AG04449 (cell line): ENCODE measurements at regions of chr7 and their contacts with region 1.

Region 1: DNA sequence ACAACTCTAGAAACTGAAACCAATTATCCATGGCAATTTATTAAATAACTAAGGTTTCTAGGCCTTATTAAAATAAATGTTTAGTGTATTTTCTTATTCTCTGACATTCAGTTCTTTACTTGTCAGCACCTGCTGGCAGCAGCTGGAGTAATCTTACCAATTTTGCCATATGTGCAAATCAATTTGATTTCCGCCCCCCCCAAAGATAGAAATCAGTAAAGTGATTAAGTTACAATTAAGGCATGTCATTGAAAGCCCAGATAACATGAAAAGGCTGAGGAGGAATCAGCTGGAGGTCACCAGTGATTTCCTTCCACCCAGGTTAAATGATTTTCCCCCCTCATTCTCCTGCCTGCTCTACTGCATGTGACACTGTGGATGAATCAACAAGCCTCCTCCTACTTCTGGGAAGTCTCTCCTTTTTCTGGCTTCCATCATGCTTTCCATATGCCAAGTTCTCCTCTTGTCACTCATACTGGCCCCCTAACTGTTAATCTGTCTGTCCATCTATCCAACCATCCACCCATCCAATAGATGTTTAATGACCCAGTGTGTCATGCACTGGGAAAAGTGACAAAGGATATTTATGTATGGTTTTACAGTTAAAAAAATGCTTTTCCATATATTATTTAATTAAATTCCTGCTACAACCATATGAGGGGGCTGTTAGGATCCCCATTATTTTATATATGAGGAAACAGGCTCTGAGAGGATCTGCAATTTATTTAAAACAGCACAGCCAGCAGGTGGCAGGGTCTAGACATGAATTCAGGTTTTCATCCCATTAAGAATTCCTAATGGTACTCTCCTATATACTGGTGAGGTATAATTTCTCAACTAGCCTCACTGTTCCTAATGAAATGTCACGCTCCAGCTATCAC is 116.5 kb downstream of the ATXN7L1 start:
- DNase-seq: no peak
- H3K4me3 ChIP-seq: no peak overlapping the region
- CTCF ChIP-seq: peak; percentile 36

Region 2: DNA sequence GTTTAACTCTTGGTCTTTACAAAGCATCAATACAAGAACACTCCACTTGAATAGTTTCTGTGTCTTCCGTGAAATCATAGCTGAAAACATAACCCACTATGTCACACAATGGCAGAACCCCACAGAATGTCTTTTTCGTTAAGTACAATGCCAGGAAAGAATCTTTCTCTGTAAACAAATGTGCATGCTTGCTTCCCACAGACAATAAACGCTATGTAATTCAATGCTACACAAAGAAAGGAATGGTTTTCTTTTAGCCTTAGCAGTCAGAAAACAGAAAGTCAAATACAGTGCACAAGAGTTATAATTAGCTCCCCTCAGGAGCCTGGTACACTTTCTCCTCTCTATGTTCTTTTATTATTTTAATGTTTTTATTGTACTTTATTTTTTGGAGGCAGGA is 557.3 kb before region 1 on chr7:
- CTCF ChIA-PET with region 1: no interaction called
- POLR2A ChIA-PET with region 1: no interaction called
- DNase-seq: no peak
- H3K4me3 ChIP-seq: no peak overlapping the region
- CTCF ChIP-seq: no peak

Region 3: DNA sequence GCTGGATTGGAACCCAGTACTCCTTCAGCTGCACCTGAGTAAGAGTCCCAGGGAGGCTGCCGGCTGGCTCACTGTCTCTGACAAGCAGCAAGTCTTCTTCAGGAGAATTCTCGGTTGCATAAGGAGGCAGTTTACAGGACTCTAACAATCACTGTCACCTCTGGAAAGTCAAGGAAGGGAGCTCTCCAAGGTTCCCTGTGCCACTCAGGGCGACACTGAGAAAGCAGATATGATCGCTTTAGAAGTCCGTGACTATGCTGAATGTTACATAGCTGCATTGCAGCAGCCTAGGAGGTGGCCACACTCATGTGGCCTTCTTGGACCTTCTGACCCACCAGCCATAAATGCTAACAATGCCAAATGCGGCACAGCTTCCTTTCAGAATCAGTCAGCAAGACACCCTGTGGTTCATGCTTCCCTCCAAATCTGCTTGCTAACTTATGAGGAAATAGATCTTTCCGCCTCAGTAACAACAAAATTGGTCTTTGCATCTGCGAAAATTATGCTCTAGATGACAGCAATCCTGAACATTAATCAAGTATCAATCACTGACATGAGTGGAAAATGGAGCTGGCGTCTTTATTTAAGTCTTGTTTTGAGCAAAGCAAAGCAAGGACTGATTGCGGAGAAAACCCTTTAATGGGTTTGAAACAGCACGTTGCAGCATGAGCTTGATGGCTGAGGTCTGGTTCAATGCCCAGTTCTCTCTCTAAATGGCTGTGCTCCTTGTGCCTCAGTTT is 16.4 kb before region 1 on chr7:
- CTCF ChIA-PET with region 1: interaction called, 78 read pairs
- POLR2A ChIA-PET with region 1: interaction called, 3 read pairs
- DNase-seq: no peak
- H3K4me3 ChIP-seq: no peak overlapping the region
- CTCF ChIP-seq: no peak

Region 4: DNA sequence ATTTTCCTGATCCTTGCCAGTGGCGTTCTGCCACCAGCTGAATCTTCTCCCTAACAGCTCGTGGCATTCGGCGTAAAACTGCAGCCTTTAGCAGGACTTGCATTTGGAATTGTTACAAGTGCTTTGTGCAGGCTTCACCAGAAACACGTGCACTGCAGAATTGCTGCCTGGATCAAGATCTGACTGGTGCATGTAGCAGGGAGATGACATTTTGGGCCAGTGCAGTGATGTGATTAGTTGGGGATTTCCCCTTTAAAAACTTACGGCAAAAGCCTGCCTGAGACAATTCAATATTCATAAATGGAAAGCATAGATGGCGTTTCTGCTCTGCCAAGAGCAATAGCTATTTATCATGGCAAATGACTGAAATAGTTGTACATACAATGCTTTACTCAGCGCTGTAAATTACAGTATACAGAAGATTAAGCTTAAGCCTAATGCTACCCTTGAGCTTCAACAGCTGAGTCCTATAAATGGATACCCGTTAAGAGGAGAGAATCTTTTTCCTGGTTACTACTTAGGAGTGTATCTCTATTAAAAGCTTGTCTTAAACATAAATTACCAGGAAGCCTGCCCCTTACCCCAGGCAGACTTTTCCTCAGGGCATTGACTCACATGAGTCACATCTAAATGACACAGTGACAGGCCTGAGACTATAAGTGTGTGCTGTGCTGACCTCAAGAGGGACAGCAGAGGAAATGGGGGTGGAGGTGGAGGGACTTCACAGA is 10.2 kb after region 1 on chr7:
- CTCF ChIA-PET with region 1: interaction called, 78 read pairs
- POLR2A ChIA-PET with region 1: no interaction called
- DNase-seq: no peak
- H3K4me3 ChIP-seq: no peak overlapping the region
- CTCF ChIP-seq: no peak

Region 5: GRCh38 chr7:105934572-105935185 is 174.8 kb after region 1 on chr7:
- CTCF ChIA-PET with region 1: interaction called, 22 read pairs
- POLR2A ChIA-PET with region 1: no interaction called
- DNase-seq: no peak
- H3K4me3 ChIP-seq: no peak overlapping the region
- CTCF ChIP-seq: peak; percentile 28

Region 6: DNA sequence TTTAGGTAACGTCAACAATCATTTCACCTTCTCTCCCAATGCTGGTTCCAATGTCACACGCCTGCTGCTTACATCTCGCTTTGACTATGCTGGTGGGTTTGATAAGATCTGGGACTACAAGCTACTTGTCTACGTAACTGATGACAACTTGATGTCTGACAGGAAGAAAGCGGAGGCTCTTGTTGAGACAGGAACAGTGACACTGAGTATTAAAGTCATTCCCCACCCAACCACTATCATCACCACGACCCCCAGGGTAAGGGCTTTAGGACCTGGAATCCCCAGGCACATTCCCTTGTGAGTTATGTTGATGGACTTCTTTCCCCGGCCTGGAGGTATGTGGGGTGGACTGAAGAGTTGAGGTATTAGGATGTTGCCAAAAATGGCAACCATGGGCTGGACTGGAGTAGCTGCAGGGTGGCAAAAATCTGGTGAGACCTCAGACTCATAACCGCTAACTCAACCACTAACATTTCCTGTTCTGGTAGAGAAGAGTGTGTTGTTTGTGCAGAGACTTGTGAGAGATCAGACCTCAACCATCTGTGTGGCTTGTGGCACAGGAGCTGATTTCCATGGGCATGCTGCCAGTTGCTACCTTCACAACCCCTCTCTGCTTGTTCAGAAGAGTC is 262.4 kb after region 1 on chr7:
- CTCF ChIA-PET with region 1: interaction called, 14 read pairs
- POLR2A ChIA-PET with region 1: no interaction called
- DNase-seq: no peak
- H3K4me3 ChIP-seq: no peak overlapping the region
- CTCF ChIP-seq: no peak

Region 7: DNA sequence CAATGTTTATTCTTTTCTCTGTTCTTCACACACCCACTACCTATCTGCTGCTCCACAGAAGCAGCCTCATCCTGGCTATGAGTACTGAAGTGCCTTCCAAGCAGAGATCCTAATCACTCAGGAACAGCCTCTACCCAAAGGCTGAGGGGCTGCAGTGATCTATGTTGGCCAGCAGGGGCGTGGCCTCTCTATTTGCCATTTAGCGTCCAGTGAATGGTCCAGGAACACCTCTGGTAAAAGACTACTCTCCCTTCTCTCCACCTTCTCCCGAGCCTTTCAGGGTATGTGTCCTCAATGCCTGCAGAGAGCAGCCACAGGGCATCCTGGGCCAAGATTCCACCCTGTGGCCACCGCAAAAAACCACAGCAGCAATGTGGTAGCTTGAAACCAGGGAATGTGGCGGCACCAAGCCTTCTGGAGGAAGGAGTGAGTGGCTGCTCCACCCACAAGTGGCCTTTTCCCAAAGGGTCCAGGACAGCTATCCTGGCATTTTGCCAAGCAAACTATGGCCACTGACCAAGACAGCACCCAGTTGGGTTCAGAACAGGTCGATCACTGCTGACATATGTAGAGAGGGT is 281.3 kb after region 1 on chr7:
- CTCF ChIA-PET with region 1: interaction called, 319 read pairs
- POLR2A ChIA-PET with region 1: no interaction called
- DNase-seq: no peak
- H3K4me3 ChIP-seq: no peak overlapping the region
- CTCF ChIP-seq: peak; percentile 38